HCT116 (cell line): ENCODE measurements at regions of chr5 and their contacts with region 1.

Region 1: GRCh38 chr5:55344392-55344992 is 36.7 kb downstream of the MTREX start:
- DNase-seq: peak; percentile 36
- ATAC-seq: peak; percentile 47; the same call in 1 of the 2 replicates
- H3K4me3 ChIP-seq: no peak overlapping the region
- H3K27ac ChIP-seq: no peak overlapping the region
- H3K4me1 ChIP-seq: no peaks in the 10 kb centered on the region
- H3K27me3 ChIP-seq: no peaks in the 10 kb centered on the region
- CTCF ChIP-seq: peak; percentile 48 to 83 (median 72); a peak in 5 of 6 replicates
- POLR2A ChIP-seq: no peak
- RAD21 ChIP-seq: peak; percentile 58

Region 2: GRCh38 chr5:55289808-55290207 is 54.7 kb before region 1 on chr5:
- CTCF ChIA-PET with region 1: no interaction called
- POLR2A ChIA-PET with region 1: no interaction called
- RAD21 ChIA-PET with region 1: no interaction called
- intact Hi-C with region 1: loop called (anchors 2 kb)
- DNase-seq: no peak
- ATAC-seq: no peak
- H3K4me3 ChIP-seq: no peak overlapping the region
- H3K27ac ChIP-seq: no peak overlapping the region
- H3K4me1 ChIP-seq: no peaks in the 10 kb centered on the region
- H3K27me3 ChIP-seq: no peaks in the 10 kb centered on the region
- CTCF ChIP-seq: no peak
- POLR2A ChIP-seq: no peak
- RAD21 ChIP-seq: no peak

Region 3: GRCh38 chr5:55387874-55388273 is 43.4 kb after region 1 on chr5:
- CTCF ChIA-PET with region 1: no interaction called
- POLR2A ChIA-PET with region 1: no interaction called
- RAD21 ChIA-PET with region 1: no interaction called
- intact Hi-C with region 1: no loop called
- DNase-seq: no peak
- ATAC-seq: no peak
- H3K4me3 ChIP-seq: no peak overlapping the region
- H3K27ac ChIP-seq: no peak overlapping the region
- H3K4me1 ChIP-seq: no peaks in the 10 kb centered on the region
- H3K27me3 ChIP-seq: no peaks in the 10 kb centered on the region
- CTCF ChIP-seq: no peak
- POLR2A ChIP-seq: no peak
- RAD21 ChIP-seq: no peak